ENCODE measurements at regions of chr13 and their contacts with region 1.

Region 1: GRCh38 chr13:99656092-99656745 is 154.9 kb downstream of the TM9SF2 start:
- DNase-seq: no peak
- H3K4me3 ChIP-seq: no peak overlapping the region
- CTCF ChIP-seq: peak; percentile 92

Region 2: GRCh38 chr13:98927951-98928927 is 728.0 kb before region 1 on chr13:
- CTCF ChIA-PET with region 1: no interaction called
- POLR2A ChIA-PET with region 1: no interaction called
- DNase-seq: no peak
- H3K4me3 ChIP-seq: no peak overlapping the region
- CTCF ChIP-seq: no peak

Region 3: GRCh38 chr13:99566125-99567083 is 89.8 kb before region 1 on chr13:
- CTCF ChIA-PET with region 1: no interaction called
- POLR2A ChIA-PET with region 1: no interaction called
- DNase-seq: no peak
- H3K4me3 ChIP-seq: no peak overlapping the region
- CTCF ChIP-seq: no peak

Region 4: GRCh38 chr13:99640260-99640659 is 16.0 kb before region 1 on chr13:
- CTCF ChIA-PET with region 1: interaction called, 39 read pairs
- POLR2A ChIA-PET with region 1: no interaction called
- DNase-seq: no peak
- H3K4me3 ChIP-seq: no peak overlapping the region
- CTCF ChIP-seq: no peak

Region 5: GRCh38 chr13:99721606-99722337 is 65.6 kb after region 1 on chr13:
- CTCF ChIA-PET with region 1: no interaction called
- POLR2A ChIA-PET with region 1: no interaction called
- DNase-seq: no peak
- H3K4me3 ChIP-seq: no peak overlapping the region
- CTCF ChIP-seq: no peak

Region 6: DNA sequence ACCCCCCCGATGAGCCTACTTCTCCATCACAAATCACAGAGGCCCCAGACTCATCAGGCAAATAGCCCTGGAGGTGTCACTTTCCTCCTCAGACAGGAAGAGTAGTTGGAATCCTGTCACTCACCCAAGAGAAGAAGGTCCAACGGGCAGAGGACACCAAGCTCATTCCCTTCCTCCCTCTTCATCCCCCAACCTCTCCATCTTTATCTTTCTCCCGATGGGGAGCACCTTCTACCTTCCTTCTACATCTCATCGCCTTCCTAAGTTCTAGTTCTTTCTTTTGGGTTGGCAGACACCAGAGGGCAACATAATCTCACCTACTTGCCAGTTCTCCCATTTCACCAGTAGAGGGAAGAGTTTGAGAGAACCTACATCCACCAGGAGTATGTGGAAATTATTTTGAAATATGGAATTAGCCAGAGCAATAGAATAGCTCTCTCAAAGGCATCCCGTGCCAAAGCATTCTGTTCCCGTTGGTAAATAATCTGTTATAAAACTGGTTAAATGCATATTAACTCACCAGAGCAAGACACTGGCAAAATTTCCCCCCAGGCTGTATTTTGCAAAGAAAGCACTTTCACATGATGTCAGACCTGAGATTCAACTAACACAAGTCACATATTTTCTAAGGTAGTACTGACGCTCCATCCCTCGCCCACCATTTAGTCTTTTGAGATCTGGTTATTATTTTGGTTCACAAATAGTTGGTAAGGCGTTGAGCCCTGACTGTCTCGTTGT is 260.3 kb after region 1 on chr13:
- CTCF ChIA-PET with region 1: interaction called, 14 read pairs
- POLR2A ChIA-PET with region 1: no interaction called
- DNase-seq: peak; percentile 23
- H3K4me3 ChIP-seq: no peak overlapping the region
- CTCF ChIP-seq: peak; percentile 92

Region 7: GRCh38 chr13:100514788-100515409 is 858.7 kb after region 1 on chr13:
- CTCF ChIA-PET with region 1: interaction called, 15 read pairs
- POLR2A ChIA-PET with region 1: no interaction called
- DNase-seq: no peak
- H3K4me3 ChIP-seq: no peak overlapping the region
- CTCF ChIP-seq: peak; percentile 92

Region 8: DNA sequence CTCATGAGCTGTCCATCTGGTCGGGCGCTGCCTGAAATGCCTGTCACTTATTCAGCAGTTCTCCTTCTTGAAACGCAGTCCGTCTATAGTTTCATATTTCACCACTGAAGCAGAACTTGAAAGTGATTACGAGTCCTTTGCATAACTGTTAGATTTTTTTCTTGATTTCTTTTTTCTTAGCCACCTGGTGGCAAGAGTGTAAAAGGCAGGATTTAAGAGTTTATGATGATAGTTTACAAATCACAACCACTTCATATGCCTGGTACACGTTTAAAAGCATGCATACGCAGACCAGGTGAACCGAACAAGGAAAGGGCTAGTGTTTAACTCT is 886.6 kb after region 1 on chr13:
- CTCF ChIA-PET with region 1: interaction called, 27 read pairs
- POLR2A ChIA-PET with region 1: no interaction called
- DNase-seq: no peak
- H3K4me3 ChIP-seq: no peak overlapping the region
- CTCF ChIP-seq: peak; percentile 33

Region 9: DNA sequence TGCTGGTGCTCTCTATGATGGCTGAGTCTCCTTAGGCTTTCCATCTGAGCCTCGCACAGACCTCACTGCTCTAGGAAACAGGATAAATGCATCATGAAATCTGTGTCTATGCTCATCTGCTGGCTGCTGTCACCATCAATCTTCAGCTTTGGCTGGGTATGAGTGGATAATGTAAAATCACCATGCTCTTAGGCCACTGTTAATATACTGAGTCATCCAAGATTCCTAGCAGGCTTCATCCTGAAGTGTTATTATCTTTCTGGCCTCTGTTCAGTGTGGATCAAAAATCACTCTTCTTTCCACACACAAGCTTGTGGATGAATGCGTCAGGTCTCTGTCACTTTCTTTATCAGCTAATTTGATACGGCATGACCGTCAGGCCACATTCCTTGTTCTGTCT is 1442.7 kb after region 1 on chr13:
- CTCF ChIA-PET with region 1: interaction called, 18 read pairs
- POLR2A ChIA-PET with region 1: no interaction called
- DNase-seq: no peak
- H3K4me3 ChIP-seq: no peak overlapping the region
- CTCF ChIP-seq: no peak

Region 10: GRCh38 chr13:101127741-101128353 is 1471.6 kb after region 1 on chr13:
- CTCF ChIA-PET with region 1: interaction called, 15 read pairs
- POLR2A ChIA-PET with region 1: no interaction called
- DNase-seq: no peak
- H3K4me3 ChIP-seq: no peak overlapping the region
- CTCF ChIP-seq: peak; percentile 64